A549 (cell line): ENCODE measurements at regions of chr17 and their contacts with region 1.

Region 1: DNA sequence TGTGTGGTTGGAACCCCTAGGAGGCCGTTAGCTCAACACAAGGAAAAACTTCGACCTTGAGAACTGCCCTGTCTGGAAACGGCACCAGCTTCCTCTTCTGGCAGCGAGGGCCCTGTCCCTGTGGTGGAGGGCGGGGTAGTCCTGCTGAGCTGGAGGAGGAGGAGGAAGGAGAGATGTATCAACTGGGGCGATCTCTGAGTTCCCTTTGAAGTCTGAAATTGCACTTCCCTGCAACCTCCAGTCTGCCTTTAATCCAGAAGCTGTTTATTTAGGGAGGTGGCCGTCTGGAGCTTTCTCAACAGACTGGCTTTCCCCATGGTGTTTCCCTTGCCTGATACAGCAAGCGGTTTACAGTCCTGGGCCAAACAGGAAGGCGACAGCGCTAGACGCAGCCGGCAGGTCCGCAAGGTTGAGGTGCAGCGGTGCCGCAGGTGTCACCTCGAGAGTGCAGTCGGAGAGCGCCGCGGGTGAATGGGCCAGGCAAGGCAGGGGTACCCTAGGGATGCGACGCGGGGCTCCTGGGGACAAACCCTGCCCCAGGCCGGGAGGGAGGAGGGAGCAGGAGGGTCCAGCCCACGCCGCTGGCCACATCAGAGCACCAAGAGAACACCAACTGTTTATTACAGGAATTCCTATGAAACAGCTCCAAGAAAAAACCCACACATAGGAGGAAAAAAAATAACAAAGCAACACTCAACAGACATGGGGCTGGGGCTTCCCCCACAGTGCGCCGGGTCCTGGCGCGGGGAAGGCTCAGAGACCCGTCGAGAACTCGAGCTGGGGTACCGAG is 11.4 kb upstream of the MRPS23 start:
- DNase-seq: peak; percentile 78 to 90
- ATAC-seq: peak; percentile 37 to 64
- H3K4me3 ChIP-seq: peak overlapping the region; percentile 40
- H3K27ac ChIP-seq: peak overlapping the region; percentile 92 to 95
- H3K4me1 ChIP-seq: peaks cover 73% of the 10 kb centered on the region
- CTCF ChIP-seq: no peak
- EP300 ChIP-seq: peak; percentile 68 to 88; a peak in 4 of 5 replicates
- POLR2A ChIP-seq: peak; percentile 24; the same call in 1 of the 2 replicates
- RAD21 ChIP-seq: peak; percentile 20 to 34; a peak in 1 of 5 replicates

Region 2: GRCh38 chr17:57612202-57613071 is 248.8 kb before region 1 on chr17:
- CTCF ChIA-PET with region 1: no interaction called
- POLR2A ChIA-PET with region 1: no interaction called
- DNase-seq: no peak
- ATAC-seq: no peak
- H3K4me3 ChIP-seq: no peak overlapping the region
- H3K27ac ChIP-seq: no peak overlapping the region
- H3K4me1 ChIP-seq: 0 out of 3 replicates have a peak, but pooled peaks cover 2% of the 10 kb centered on the region
- CTCF ChIP-seq: no peak
- EP300 ChIP-seq: no peak
- POLR2A ChIP-seq: no peak
- RAD21 ChIP-seq: no peak

Region 3: GRCh38 chr17:57773557-57773956 is 87.6 kb before region 1 on chr17:
- CTCF ChIA-PET with region 1: no interaction called
- POLR2A ChIA-PET with region 1: no interaction called
- DNase-seq: no peak
- ATAC-seq: no peak
- H3K4me3 ChIP-seq: no peak overlapping the region
- H3K27ac ChIP-seq: no peak overlapping the region
- H3K4me1 ChIP-seq: 0 out of 3 replicates have a peak, but pooled peaks cover 4% of the 10 kb centered on the region
- CTCF ChIP-seq: no peak
- EP300 ChIP-seq: no peak
- POLR2A ChIP-seq: no peak
- RAD21 ChIP-seq: no peak

Region 4: GRCh38 chr17:57849874-57850754 is 11.1 kb before region 1 on chr17 and contains the start of gene MRPS23:
- CTCF ChIA-PET with region 1: interaction called, 499 read pairs
- POLR2A ChIA-PET with region 1: interaction called, 31 read pairs
- DNase-seq: peak; percentile 91 to 99
- ATAC-seq: peak; percentile 93 to 95
- H3K4me3 ChIP-seq: peak within 1 kb of the TSS; percentile 95
- H3K27ac ChIP-seq: peak within 1 kb of the TSS; percentile 93
- H3K4me1 ChIP-seq: peaks cover 54% of the 10 kb centered on the region
- CTCF ChIP-seq: no peak
- EP300 ChIP-seq: no peak
- POLR2A ChIP-seq: peak; percentile 84
- RAD21 ChIP-seq: peak; percentile 28 to 34; a peak in 4 of 5 replicates
- polyA plus RNA-seq, gene MRPS23: 73.2 and 110 TPM in 2 replicates

Region 5: GRCh38 chr17:57939797-57940196 is 78.6 kb after region 1 on chr17:
- CTCF ChIA-PET with region 1: interaction called, 227 read pairs
- POLR2A ChIA-PET with region 1: no interaction called
- DNase-seq: no peak
- ATAC-seq: no peak
- H3K4me3 ChIP-seq: no peak overlapping the region
- H3K27ac ChIP-seq: peak overlapping the region; percentile 55 to 87
- H3K4me1 ChIP-seq: peaks cover 94% of the 10 kb centered on the region
- CTCF ChIP-seq: no peak
- EP300 ChIP-seq: no peak
- POLR2A ChIP-seq: no peak
- RAD21 ChIP-seq: no peak

Region 6: GRCh38 chr17:57965521-57966160 is 104.4 kb after region 1 on chr17:
- CTCF ChIA-PET with region 1: interaction called, 23 read pairs
- POLR2A ChIA-PET with region 1: no interaction called
- DNase-seq: no peak
- ATAC-seq: no peak
- H3K4me3 ChIP-seq: no peak overlapping the region
- H3K27ac ChIP-seq: no peak overlapping the region
- H3K4me1 ChIP-seq: peaks cover 16% of the 10 kb centered on the region
- CTCF ChIP-seq: no peak
- EP300 ChIP-seq: no peak
- POLR2A ChIP-seq: no peak
- RAD21 ChIP-seq: no peak

Region 7: GRCh38 chr17:57987580-57988421 is 126.6 kb after region 1 on chr17 and contains the start of gene VEZF1:
- CTCF ChIA-PET with region 1: interaction called, 1,377 read pairs
- POLR2A ChIA-PET with region 1: interaction called, 17 read pairs
- DNase-seq: peak; percentile 76 to 85
- ATAC-seq: peak; percentile 65 to 70
- H3K4me3 ChIP-seq: peak within 1 kb of the TSS; percentile 77
- H3K27ac ChIP-seq: peak within 1 kb of the TSS; percentile 96 to 98
- H3K4me1 ChIP-seq: peaks cover 75% of the 10 kb centered on the region
- CTCF ChIP-seq: no peak
- EP300 ChIP-seq: no peak
- POLR2A ChIP-seq: peak; percentile 18; the same call in 1 of the 2 replicates
- RAD21 ChIP-seq: 0 out of 5 replicates have a peak, but pooled peaks of 1 of the 2 experiments have one; percentile 9
- polyA plus RNA-seq, gene VEZF1: 57.7 and 63.8 TPM in 2 replicates

Region 8: DNA sequence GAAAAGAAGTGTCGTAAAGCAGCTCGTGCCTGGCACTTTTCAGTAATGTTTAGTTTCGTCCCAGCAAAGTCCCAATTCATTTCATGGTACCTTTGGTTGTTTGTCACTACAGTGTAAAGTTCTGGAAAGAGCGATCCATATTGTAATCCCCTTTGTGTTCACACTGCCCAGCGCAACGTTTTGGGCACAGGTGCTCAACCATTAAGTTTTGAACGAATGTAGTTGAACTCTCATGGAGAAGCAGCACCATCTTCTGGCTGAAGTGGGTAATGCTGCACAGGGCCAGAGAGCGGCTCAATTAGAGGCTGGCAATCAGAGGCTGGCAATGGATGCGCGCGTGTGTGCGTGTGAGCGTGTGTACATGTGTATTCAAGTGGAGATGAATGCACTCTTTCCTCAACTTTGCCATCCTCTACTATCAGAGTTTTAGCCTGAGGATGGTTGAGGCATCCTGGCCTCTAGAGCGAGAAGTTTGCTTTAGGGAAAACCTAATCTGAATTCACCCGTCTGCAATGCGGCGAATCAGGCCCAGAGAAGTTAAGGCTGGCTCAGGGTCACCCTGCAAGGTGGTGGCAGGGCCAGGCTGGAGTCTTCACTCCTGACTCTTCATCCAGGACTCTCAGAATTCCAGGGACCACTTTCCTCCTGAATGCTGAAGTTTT is 251.9 kb after region 1 on chr17:
- CTCF ChIA-PET with region 1: interaction called, 82 read pairs
- POLR2A ChIA-PET with region 1: no interaction called
- DNase-seq: peak; percentile 78 to 79
- ATAC-seq: peak; percentile 80 to 87
- H3K4me3 ChIP-seq: no peak overlapping the region
- H3K27ac ChIP-seq: no peak overlapping the region
- H3K4me1 ChIP-seq: no peaks in the 10 kb centered on the region
- CTCF ChIP-seq: peak; percentile 96
- EP300 ChIP-seq: no peak
- POLR2A ChIP-seq: no peak
- RAD21 ChIP-seq: peak; percentile 98 to 99

Region 9: DNA sequence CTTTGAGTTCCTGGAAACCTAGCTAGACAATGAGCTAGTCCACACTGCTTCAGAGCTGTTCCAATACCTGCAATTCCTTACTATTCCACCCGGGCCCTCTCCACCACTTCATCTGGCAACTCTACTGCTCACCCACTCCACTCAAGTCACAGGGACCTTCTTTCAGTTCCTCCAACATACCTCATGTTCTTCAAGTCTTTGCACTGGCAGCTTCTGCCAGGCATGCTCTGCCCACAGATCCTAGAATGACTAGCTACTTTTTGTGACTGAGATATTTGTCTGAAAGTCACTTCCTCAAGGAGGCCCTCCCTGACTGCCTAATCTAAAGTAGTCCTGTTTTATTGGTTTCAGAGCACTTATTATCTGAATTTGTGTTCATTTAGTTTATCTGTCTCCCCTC is 744.3 kb after region 1 on chr17:
- CTCF ChIA-PET with region 1: no interaction called
- POLR2A ChIA-PET with region 1: no interaction called
- DNase-seq: no peak
- ATAC-seq: peak; percentile 55 to 61; a peak in 4 of 6 replicates
- H3K4me3 ChIP-seq: no peak overlapping the region
- H3K27ac ChIP-seq: no peak overlapping the region
- H3K4me1 ChIP-seq: no peaks in the 10 kb centered on the region
- CTCF ChIP-seq: no peak
- EP300 ChIP-seq: no peak
- POLR2A ChIP-seq: no peak
- RAD21 ChIP-seq: no peak